Right cardiac atrium (tissue), 5 donors: ENCODE measurements at regions of chr2 and their contacts with region 1.

Region 1: DNA sequence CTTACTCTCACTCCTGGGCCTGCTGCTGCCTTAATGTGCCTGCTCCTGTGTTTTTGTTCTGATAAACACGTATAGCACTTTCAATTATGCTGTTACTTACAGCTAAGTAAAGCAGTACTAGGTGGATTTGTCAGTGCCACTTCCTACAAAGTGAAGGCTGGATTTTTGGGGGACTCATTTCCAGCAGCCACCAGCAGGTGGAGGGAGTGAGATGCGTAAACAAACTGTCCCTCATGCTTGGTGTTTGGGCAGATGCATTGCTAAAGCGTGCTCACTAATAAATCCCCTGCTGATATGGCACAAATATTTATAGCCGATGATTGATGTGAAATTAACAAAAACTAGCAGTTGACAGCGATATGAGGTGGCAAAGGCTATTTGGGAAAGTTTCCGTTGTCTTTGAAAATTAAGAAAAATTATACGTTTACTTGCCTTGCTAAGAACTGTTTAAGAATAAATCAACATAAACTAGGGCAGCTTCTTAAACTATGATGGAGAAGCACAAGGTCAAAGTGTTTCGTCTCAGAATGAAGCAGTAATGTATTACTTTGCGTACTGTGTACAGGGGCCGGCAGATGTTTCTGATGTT is 101.7 kb downstream of the AGAP1 start:
- DNase-seq: peak; percentile 61 to 89 (median 75)
- ATAC-seq: peak; percentile 57 to 69
- H3K4me3 ChIP-seq: no peak overlapping the region
- H3K27ac ChIP-seq: no peak overlapping the region
- H3K4me1 ChIP-seq: no peaks in the 10 kb centered on the region
- H3K27me3 ChIP-seq: no peaks in the 10 kb centered on the region

Region 2: GRCh38 chr2:235135990-235136561 is 459.4 kb before region 1 on chr2:
- intact Hi-C with region 1: loop called (anchors 2 to 5 kb)
- DNase-seq: peak; percentile 88 to 93 (median 88)
- ATAC-seq: peak; percentile 82 to 89
- H3K4me3 ChIP-seq: no peak overlapping the region
- H3K27ac ChIP-seq: no peak overlapping the region
- H3K4me1 ChIP-seq: no peaks in the 10 kb centered on the region
- H3K27me3 ChIP-seq: no peaks in the 10 kb centered on the region

Region 3: GRCh38 chr2:235433860-235434259 is 161.7 kb before region 1 on chr2:
- intact Hi-C with region 1: loop called in 1 of 4 experiments (anchors 10 kb)
- DNase-seq: peak; percentile 81 to 85 (median 82)
- ATAC-seq: peak; percentile 96 to 97
- H3K4me3 ChIP-seq: no peak overlapping the region
- H3K27ac ChIP-seq: peak overlapping the region; percentile 78
- H3K4me1 ChIP-seq: no peaks in the 10 kb centered on the region
- H3K27me3 ChIP-seq: no peaks in the 10 kb centered on the region

Region 4: GRCh38 chr2:235493775-235494715 is 101.5 kb before region 1 on chr2 and contains the start of gene AGAP1:
- intact Hi-C with region 1: loop called in 1 of 4 experiments (anchors 10 kb)
- DNase-seq: peak; percentile 92 to 97 (median 97)
- ATAC-seq: peak; percentile 93 to 95
- H3K4me3 ChIP-seq: peak within 1 kb of the TSS; percentile 96
- H3K27ac ChIP-seq: peak within 1 kb of the TSS; percentile 84
- H3K4me1 ChIP-seq: peaks cover 7% of the 10 kb centered on the region
- H3K27me3 ChIP-seq: no peaks in the 10 kb centered on the region
- total RNA-seq, gene AGAP1: 22.5 to 25.3 (median 23.3) TPM

Region 5: DNA sequence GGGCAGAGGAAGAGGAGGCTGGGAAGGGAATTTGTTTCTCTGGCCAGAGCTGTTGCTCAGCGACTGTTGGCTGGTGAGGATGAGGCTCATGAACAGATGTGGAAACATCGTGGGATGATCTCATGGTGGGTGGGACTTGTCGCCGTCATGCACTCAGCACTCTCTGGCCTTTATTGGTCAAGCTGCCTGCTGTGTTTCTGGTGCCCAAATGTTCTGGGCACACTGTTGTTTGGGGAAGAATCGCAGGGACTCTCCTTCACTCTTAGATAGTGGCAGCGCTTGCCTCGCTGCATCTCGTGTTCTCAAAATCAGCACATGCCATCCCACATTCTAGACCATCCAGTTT is 43.9 kb after region 1 on chr2:
- intact Hi-C with region 1: no loop called
- DNase-seq: peak; percentile 81 to 90 (median 83)
- ATAC-seq: peak; percentile 88 to 89
- H3K4me3 ChIP-seq: no peak overlapping the region
- H3K27ac ChIP-seq: peak overlapping the region; percentile 63
- H3K4me1 ChIP-seq: peaks cover 16% of the 10 kb centered on the region
- H3K27me3 ChIP-seq: no peaks in the 10 kb centered on the region

Region 6: GRCh38 chr2:235669269-235669831 is 73.8 kb after region 1 on chr2:
- intact Hi-C with region 1: loop called in 2 of 4 experiments (anchors 2 to 5 kb)
- DNase-seq: peak; percentile 76 to 89 (median 87)
- ATAC-seq: peak; percentile 69 to 78
- H3K4me3 ChIP-seq: peak overlapping the region; percentile 85
- H3K27ac ChIP-seq: no peak overlapping the region
- H3K4me1 ChIP-seq: peaks cover 1% of the 10 kb centered on the region
- H3K27me3 ChIP-seq: no peaks in the 10 kb centered on the region

Region 7: GRCh38 chr2:235746257-235747084 is 151.0 kb after region 1 on chr2:
- intact Hi-C with region 1: loop called (anchors 2 to 5 kb)
- DNase-seq: peak; percentile 47 to 78 (median 62)
- ATAC-seq: peak; percentile 91
- H3K4me3 ChIP-seq: no peak overlapping the region
- H3K27ac ChIP-seq: no peak overlapping the region
- H3K4me1 ChIP-seq: no peaks in the 10 kb centered on the region
- H3K27me3 ChIP-seq: no peaks in the 10 kb centered on the region